Lower lobe of right lung (tissue), 2 donors: ENCODE measurements at regions of chr11 and their contacts with region 1.

Region 1: GRCh38 chr11:122505304-122506006 is 150.1 kb upstream of the UBASH3B start:
- DNase-seq: peak; percentile 64
- ATAC-seq: peak; percentile 95 to 96
- H3K4me3 ChIP-seq: no peak overlapping the region
- H3K27ac ChIP-seq: no peak overlapping the region
- H3K4me1 ChIP-seq: peaks cover 5% of the 10 kb centered on the region
- H3K27me3 ChIP-seq: peaks cover 3% of the 10 kb centered on the region
- CTCF ChIP-seq: peak; percentile 89

Region 2: GRCh38 chr11:122215244-122215992 is 290.0 kb before region 1 on chr11:
- intact Hi-C with region 1: loop called (anchors 5 kb)
- DNase-seq: peak; percentile 70
- ATAC-seq: peak; percentile 91
- H3K4me3 ChIP-seq: no peak overlapping the region
- H3K27ac ChIP-seq: no peak overlapping the region
- H3K4me1 ChIP-seq: peaks cover 4% of the 10 kb centered on the region
- H3K27me3 ChIP-seq: no peaks in the 10 kb centered on the region
- CTCF ChIP-seq: peak; percentile 92

Region 3: DNA sequence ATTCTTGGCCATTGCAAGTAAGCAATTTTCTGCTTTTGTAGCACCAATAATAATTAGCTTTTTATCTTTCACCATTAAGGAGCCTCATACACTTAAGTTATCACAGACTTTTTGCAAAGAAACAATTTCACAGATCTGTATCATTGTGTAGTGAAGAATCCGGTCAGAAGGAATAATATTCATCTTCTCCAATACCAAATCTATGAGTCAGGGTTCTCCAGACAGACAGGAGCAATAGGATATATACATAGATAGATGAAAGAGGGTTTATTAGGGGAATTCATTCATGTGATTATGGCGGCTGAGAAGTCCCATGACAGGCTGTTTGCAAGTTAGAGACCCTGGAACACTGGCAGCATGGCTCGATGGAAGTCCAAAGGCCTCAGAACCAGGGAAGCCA is 67.1 kb after region 1 on chr11:
- intact Hi-C with region 1: no loop called
- DNase-seq: no peak
- ATAC-seq: no peak
- H3K4me3 ChIP-seq: no peak overlapping the region
- H3K27ac ChIP-seq: no peak overlapping the region
- H3K4me1 ChIP-seq: no peaks in the 10 kb centered on the region
- H3K27me3 ChIP-seq: no peaks in the 10 kb centered on the region
- CTCF ChIP-seq: no peak

Region 4: DNA sequence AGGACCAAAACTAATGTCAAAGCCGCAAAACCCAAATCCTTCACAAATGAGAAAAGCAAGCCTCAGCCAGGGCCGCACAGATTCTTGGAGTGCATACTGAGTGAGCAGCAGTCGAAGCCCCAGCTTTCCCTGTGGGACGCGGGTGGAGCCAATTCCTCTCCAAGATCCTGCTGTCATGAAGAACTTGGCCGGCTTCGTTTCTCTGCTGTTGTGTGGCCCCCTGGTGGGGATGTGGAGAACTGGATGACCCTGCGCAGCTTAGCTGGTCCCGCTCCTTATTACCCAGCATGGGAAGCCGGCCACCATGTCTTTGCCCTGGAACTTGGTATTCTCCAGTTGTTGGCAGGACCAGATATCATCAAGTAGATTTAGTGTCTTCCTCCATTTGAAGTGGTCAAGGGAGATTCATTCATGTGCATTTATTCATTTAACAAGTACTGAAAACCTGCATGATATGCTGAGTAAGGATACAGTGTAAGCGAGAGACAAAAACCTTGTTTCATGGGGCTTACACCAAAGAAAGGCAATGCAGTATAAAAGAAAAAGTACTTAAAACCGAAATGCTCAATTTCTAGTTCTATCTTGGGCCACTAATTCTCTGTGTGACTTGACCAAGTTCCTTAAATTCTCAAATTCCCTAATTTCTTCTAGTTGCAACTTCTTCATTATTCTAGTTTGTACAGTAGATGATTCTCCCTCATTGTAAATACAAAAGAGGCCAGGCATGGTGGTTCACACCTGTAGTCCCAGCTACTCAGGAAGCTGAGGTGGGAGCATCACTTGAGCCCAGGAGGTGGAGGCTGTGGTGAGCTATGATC is 276.1 kb after region 1 on chr11:
- intact Hi-C with region 1: no loop called
- DNase-seq: peak; percentile 87
- ATAC-seq: peak; percentile 87 to 94
- H3K4me3 ChIP-seq: peak overlapping the region; percentile 37
- H3K27ac ChIP-seq: peak overlapping the region; percentile 18
- H3K4me1 ChIP-seq: peaks cover 24% of the 10 kb centered on the region
- H3K27me3 ChIP-seq: no peaks in the 10 kb centered on the region
- CTCF ChIP-seq: peak; percentile 95